ENCODE measurements at regions of chr17 and their contacts with region 1.

Region 1: GRCh38 chr17:54063639-54064038 is 240.9 kb downstream of the KIF2B start:
- ATAC-seq: no peak
- H3K4me3 ChIP-seq: no peak overlapping the region
- H3K27ac ChIP-seq: no peak overlapping the region
- H3K4me1 ChIP-seq: no peaks in the 10 kb centered on the region

Region 2: DNA sequence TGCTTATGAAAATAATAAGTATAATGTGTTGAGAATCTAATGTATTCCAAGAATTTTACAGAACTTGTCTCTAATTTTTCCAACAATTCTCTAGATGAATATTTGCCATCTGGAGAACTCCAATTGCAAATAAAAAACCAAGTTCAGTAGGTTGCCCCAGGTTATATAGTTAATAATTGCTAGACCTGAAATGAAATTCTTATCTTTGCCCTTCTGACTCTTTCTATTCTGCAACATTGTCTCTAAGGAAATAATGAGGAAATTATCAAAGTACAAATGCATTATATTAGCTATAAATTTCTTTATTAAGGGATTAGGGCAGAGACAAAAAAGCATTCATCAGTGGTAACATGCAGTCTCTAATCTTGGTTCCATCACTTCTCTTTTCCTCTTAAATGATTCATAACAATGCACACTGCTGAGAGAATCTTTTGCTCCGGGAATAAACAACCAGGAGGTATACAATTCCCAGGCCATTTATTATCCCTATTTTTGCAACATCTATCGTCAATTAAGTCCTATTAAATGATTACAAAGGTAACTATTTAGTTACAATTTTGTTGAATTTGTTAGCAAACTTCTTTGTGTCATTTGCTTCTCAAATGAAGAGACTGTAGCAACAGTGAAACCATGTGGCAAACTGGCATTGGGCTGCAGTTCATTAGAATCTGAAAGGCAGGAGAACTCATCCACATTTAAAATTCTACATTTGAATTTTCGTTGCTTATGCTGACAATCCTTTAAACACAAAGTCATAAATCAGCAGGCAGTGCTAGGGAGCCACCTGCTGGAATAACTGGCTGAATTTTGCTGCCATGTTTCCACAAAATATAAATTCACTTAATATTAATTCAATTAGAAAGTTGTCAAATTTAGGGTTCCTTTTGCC is 108.7 kb after region 1 on chr17:
- in situ Hi-C with region 1: loop called in 1 of 9 experiments (anchors 25 kb)
- ATAC-seq: peak in 5 of 8 experiments; percentile 19 to 53 (median 43)
- H3K4me3 ChIP-seq: no peak overlapping the region
- H3K27ac ChIP-seq: no peak overlapping the region
- H3K4me1 ChIP-seq: peaks cover 0 to 7% of the 10 kb centered on the region in 2 donors

Measured in motor neuron (in vitro differentiated cells).